Posterior vena cava (tissue), 2 donors: ENCODE measurements at regions of chr4 and their contacts with region 1.

Region 1: DNA sequence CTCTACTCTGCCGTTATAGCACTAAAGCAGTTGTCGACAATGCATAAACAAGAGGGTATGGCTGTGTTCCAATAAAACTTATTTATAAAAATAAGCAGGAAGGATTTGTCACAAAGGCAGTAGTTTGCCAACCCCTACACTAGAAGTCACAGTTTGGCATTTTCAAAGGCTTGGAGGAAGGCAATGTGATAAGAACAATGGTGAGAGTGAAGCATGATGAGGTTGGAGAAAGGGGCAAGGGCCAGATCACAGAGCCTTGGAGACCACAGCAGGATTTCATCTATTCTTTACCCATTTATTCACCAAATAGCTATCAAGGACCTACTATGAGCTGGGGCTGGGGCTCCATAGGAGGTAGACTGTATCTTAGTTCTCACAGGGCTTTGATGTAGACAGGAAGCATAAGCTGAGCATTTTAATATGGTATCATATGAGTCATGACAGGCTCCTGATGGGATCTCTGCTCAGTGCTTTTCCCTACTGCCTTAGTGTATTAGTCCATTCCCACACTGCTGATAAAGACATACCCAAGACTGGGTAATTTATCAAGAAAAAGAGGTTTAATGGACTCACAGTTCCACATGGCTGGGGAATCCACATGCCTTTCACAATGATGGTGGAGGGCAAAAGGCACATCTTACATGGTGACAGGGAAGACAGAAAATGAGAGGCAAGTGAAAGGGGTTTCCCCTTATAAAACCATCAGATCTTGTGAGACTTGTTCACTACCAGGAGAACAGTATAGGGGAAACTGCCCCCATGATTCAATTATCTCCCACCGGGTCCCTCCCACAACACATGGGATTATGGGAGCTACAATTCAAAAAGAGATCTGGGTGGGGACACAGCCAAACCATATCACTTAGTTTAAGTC is 58.9 kb downstream of the PPM1K start:
- DNase-seq: no peak

Region 2: DNA sequence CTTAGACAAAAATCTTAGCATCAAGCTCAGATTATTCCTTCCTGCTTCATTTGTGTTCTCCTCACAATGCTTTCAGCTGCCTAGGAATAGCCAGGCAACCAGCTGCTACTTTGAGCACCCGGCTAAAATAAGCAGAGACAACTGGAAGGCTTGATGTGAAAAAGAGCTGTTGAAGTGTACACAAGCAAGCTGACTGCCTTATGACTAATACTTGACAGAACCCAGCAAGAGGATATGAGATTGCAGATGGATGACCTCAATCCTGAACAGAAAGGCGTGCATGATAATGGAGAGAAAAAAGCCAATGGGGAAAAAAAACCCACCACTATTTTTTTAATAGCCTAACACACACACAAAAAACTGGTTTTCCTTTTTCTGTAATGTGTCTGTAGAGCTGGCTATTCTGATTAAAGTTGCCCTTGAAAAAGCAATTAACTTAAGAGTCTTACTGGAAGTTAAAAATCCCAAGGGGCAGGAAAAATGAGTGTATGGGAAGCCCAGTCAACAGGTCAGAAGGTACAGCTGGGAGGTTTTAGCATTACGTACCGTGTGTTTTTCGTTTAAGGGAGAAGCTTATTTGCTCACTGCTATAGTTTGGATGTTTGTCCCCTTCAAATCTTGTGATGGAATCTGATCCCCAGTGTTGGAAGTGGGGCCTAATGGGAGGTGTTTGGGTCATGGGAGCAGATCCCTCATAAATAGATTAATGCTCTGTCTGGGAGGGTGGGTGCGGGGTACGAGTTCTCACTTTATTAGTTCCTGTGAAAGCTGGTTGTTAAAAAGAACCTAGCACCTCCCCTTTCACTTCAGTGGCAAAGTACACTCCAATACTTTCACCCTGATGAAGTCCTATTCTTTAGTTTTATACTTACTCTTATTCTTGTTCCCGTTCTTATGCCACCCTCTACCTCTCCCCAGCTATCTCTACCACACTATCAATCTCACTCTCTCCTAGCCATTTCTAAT is 116.0 kb after region 1 on chr4:
- intact Hi-C with region 1: loop called in 1 of 2 experiments (anchors 10 kb)
- DNase-seq: no peak

Region 3: DNA sequence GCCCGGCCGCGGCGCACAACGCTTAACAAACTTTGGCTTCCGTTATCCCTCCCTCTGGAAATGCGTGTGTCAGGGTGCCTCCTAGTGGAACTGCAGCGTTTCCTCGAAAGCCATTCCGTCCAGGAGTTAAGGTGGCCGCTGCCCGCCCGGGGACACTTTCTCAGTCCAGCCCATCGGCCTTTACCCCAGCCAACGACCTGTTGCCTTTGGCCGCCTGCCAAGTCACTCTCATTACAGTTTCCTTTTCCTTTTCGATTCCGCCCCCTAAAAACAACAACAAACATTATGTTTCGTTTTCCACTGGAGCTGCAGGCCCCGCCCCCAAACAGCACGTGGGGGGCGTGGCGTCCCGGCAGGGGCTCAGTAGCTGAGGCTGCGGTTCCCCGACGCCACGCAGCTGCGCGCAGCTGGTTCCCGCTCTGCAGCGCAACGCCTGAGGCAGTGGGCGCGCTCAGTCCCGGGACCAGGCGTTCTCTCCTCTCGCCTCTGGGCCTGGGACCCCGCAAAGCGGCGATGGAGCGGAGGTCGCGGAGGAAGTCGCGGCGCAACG is 231.4 kb after region 1 on chr4 and contains the start of gene HERC5:
- intact Hi-C with region 1: loop called in 1 of 2 experiments (anchors 10 kb)
- DNase-seq: peak; percentile 97
- total RNA-seq, gene HERC5: 3.7 to 5.7 TPM